ENCODE measurements at regions of chr3 and their contacts with region 1.

Region 1: GRCh38 chr3:111668912-111669488 is 73.9 kb upstream of the ZBED2 start:
- DNase-seq: no peak
- ATAC-seq: peak; percentile 88
- H3K4me3 ChIP-seq: no peak overlapping the region
- H3K27ac ChIP-seq: no peak overlapping the region
- H3K4me1 ChIP-seq: peaks cover 8% of the 10 kb centered on the region; the same call in 1 of the 2 replicates
- H3K27me3 ChIP-seq: no peaks in the 10 kb centered on the region
- CTCF ChIP-seq: peak; percentile 69 to 79 (median 76)
- EP300 ChIP-seq: no peak
- POLR2A ChIP-seq: no peak
- RAD21 ChIP-seq: peak; percentile 84

Region 2: DNA sequence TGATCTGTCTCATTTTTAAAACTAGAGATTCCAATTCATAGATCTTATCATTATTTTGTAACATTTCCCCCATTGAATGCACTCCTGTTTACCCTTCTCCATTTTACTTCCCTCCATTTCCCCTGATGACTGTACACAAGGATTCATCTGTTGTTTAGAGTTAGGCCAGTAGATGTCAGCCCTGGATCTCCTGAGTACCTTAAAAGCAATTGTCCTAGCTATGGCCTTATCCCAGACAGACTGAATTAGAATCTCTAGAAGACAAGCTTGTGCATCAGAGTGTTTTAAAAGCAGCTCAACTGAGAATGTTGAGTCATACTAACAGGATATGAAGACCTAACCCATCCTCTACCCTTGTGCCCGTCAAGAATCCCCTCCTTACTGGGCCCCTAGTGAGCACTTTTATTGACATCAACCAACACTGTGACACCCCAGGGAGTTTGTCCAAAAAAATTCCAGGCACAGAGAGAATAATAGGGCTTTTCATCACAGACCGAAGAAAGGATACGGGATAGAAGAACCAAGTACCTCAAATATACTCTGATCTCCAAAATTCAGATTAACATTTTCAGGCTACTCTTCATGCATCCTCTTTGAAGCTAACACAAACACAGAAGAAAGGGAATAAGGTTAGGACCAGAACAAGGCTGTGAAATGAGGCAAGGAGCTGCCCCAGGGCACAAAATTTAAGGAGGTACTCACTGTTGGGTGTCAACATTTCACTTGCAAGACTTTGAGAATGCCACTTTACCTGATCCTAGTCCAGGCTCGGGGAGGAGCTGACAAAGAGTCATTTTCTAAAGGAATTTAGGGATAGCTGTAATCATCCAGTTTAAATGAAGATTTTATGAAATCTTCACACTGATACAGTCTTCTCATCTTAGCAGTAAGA is 91.0 kb before region 1 on chr3:
- CTCF ChIA-PET with region 1: interaction called, 21 read pairs
- POLR2A ChIA-PET with region 1: interaction called, 3 read pairs
- RAD21 ChIA-PET with region 1: interaction called, 24 read pairs
- SMC1A ChIA-PET with region 1: interaction called, 29 read pairs
- in situ Hi-C with region 1: no loop called
- intact Hi-C with region 1: loop called (anchors 1 kb)
- DNase-seq: peak; percentile 39
- ATAC-seq: peak; percentile 94
- H3K4me3 ChIP-seq: no peak overlapping the region
- H3K27ac ChIP-seq: no peak overlapping the region
- H3K4me1 ChIP-seq: no peaks in the 10 kb centered on the region
- H3K27me3 ChIP-seq: no peaks in the 10 kb centered on the region; a peak in 1 of 4 replicates
- CTCF ChIP-seq: peak; percentile 33 to 58 (median 34); a peak in 5 of 6 replicates
- EP300 ChIP-seq: no peak
- POLR2A ChIP-seq: no peak
- RAD21 ChIP-seq: peak; percentile 58

Region 3: GRCh38 chr3:111691293-111691909 is 22.4 kb after region 1 on chr3:
- CTCF ChIA-PET with region 1: interaction called, 9 read pairs
- POLR2A ChIA-PET with region 1: interaction called, 3 read pairs
- RAD21 ChIA-PET with region 1: interaction called, 112 read pairs
- SMC1A ChIA-PET with region 1: interaction called, 19 read pairs
- in situ Hi-C with region 1: no loop called
- intact Hi-C with region 1: no loop called
- DNase-seq: no peak
- ATAC-seq: peak; percentile 63
- H3K4me3 ChIP-seq: no peak overlapping the region
- H3K27ac ChIP-seq: no peak overlapping the region
- H3K4me1 ChIP-seq: peaks cover 6% of the 10 kb centered on the region; the same call in 1 of the 2 replicates
- H3K27me3 ChIP-seq: no peaks in the 10 kb centered on the region
- CTCF ChIP-seq: peak; percentile 24 to 44 (median 31); a peak in 4 of 6 replicates
- EP300 ChIP-seq: no peak
- POLR2A ChIP-seq: no peak
- RAD21 ChIP-seq: peak; percentile 52

Region 4: DNA sequence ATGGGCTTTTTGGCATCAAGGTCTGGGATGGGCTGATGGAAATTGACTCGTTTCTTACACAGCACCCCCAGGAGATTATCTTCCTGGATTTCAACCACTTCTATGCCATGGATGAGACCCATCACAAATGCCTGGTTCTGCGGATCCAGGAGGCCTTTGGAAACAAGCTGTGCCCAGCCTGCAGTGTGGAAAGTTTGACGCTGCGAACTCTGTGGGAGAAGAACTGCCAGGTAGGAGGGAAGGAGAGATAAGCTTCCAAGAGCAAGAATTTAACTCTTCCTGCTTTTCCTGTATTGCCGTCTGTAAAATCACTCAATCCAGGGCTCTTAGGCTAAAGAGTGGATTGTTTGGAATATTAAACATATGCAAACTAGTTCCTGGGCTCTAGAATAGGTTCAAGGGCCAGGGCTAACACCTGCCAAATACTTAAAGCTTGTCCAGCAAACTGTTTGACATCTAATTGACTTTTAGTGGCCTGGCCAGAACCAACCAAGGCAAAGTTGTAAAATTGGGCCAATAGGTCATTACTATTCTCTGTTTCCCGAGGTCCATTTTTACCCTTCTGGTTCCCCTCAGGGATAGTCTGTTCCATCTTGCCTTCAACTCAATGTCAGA is 39.3 kb after region 1 on chr3:
- CTCF ChIA-PET with region 1: interaction called, 8 read pairs
- POLR2A ChIA-PET with region 1: no interaction called
- RAD21 ChIA-PET with region 1: interaction called, 7 read pairs
- SMC1A ChIA-PET with region 1: interaction called, 32 read pairs
- in situ Hi-C with region 1: no loop called
- intact Hi-C with region 1: loop called (anchors 5 kb)
- DNase-seq: no peak
- ATAC-seq: no peak
- H3K4me3 ChIP-seq: no peak overlapping the region
- H3K27ac ChIP-seq: no peak overlapping the region
- H3K4me1 ChIP-seq: no peaks in the 10 kb centered on the region
- H3K27me3 ChIP-seq: no peaks in the 10 kb centered on the region
- CTCF ChIP-seq: no peak
- EP300 ChIP-seq: no peak
- POLR2A ChIP-seq: no peak
- RAD21 ChIP-seq: no peak

Region 5: GRCh38 chr3:111859974-111860859 is 191.2 kb after region 1 on chr3:
- CTCF ChIA-PET with region 1: interaction called, 14 read pairs
- POLR2A ChIA-PET with region 1: no interaction called
- RAD21 ChIA-PET with region 1: interaction called, 9 read pairs
- SMC1A ChIA-PET with region 1: interaction called, 6 read pairs
- in situ Hi-C with region 1: no loop called
- intact Hi-C with region 1: loop called (anchors 5 kb)
- DNase-seq: peak; percentile 30
- ATAC-seq: peak; percentile 91
- H3K4me3 ChIP-seq: peak overlapping the region; percentile 64
- H3K27ac ChIP-seq: no peak overlapping the region
- H3K4me1 ChIP-seq: peaks cover 5% of the 10 kb centered on the region
- H3K27me3 ChIP-seq: peaks cover 2 to 13% of the 10 kb centered on the region in 2 experiments
- CTCF ChIP-seq: peak; percentile 21 to 33 (median 33); a peak in 3 of 6 replicates
- EP300 ChIP-seq: no peak
- POLR2A ChIP-seq: no peak
- RAD21 ChIP-seq: peak; percentile 53

Region 6: DNA sequence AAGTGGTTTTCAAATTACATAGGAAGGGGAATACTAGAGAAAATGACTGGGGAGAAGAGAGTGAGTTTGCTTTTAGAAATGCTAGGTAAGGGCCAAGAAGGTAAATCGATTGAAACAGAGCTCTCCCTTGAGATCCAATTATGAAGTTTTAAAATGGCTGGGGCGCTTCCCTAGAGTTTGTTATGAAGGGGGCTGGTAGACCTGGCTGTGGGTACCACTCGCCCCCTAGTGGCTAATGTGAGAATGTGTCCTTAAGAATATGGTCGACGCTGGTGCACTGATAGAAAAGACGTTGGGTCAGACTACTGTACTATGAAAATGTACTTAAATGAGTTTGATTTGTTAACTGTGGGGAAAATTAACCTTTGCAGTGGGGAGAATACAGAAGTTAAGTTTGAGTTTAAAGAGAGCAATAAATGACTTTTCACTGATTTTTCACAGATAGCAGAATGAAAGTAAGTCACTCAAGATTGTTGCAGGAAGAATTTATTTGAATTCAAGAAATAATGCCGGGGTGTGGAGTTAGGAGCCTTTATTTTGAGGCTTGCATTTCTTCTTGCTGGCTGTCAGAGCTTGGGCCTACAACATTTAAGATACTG is 374.7 kb after region 1 on chr3:
- CTCF ChIA-PET with region 1: interaction called, 10 read pairs
- POLR2A ChIA-PET with region 1: no interaction called
- RAD21 ChIA-PET with region 1: interaction called, 3 read pairs
- SMC1A ChIA-PET with region 1: no interaction called
- in situ Hi-C with region 1: no loop called
- intact Hi-C with region 1: no loop called
- DNase-seq: peak; percentile 8
- ATAC-seq: peak; percentile 95
- H3K4me3 ChIP-seq: no peak overlapping the region
- H3K27ac ChIP-seq: no peak overlapping the region
- H3K4me1 ChIP-seq: no peaks in the 10 kb centered on the region
- H3K27me3 ChIP-seq: peaks cover 0 to 6% of the 10 kb centered on the region in 2 experiments; a peak in 1 of 4 replicates
- CTCF ChIP-seq: peak; percentile 80 to 92 (median 86)
- EP300 ChIP-seq: no peak
- POLR2A ChIP-seq: no peak
- RAD21 ChIP-seq: peak; percentile 69

Measured in GM12878 (cell line).